ENCODE measurements at regions of chr11 and their contacts with region 1.

Region 1: DNA sequence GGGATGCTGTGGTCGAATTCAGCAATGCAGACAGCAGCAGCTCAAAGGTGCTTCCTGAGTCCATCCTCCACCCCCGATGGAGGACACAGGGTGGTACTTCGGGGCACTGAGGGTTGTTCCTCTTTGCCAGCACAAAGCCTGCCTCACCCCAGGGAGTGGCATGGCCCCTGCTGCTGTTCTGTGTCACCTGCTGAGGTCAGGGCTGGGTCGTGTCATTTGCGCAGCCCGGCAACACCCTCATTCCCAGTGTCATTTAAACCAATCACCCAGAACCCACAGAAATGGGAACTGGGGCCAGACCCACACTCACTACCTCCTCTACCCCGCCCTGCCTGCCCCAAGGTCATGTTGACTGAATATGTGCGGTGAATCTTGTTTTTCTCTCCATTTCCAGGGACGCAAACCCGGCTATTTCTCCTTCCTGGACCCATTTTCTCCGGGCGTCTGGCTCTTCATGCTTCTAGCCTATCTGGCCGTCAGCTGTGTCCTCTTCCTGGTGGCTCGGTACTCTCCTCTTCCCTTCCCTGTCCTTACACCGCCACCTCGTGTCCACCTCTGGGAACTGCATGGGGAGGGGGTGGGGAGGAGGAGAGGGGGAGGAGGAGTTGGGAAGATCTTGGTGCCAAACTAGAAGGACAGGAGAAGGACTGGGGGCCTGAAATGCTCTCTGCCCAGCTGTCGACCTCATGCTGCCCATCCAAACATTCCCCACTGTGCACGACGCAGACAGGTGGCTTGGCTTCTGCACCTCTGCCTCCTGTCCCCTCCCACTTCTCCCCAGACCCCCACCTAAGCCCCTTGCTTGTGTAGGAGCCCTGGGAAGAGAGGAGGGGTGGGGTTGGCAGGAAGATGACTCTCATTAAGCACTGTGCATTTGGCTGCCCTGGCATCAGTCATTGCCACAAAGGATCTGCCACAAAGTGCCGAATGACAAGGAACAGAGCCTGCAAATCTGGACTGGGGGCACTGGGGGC is 71.2 kb upstream of the TBCEL start:
- DNase-seq: peak; percentile 89 to 96 (median 92)
- H3K4me3 ChIP-seq: peak overlapping the region in 1 of 3 donors; percentile 20
- H3K27ac ChIP-seq: no peak overlapping the region
- H3K4me1 ChIP-seq: no peaks in the 10 kb centered on the region
- H3K27me3 ChIP-seq: no peaks in the 10 kb centered on the region
- CTCF ChIP-seq: peak; percentile 76

Region 2: GRCh38 chr11:120682866-120683265 is 269.9 kb before region 1 on chr11:
- intact Hi-C with region 1: loop called (anchors 10 kb)
- DNase-seq: no peak
- H3K4me3 ChIP-seq: no peak overlapping the region
- H3K27ac ChIP-seq: no peak overlapping the region
- H3K4me1 ChIP-seq: no peaks in the 10 kb centered on the region
- H3K27me3 ChIP-seq: no peaks in the 10 kb centered on the region
- CTCF ChIP-seq: no peak

Measured in kidney (tissue), 22 donors.